ENCODE measurements at regions of chr2 and their contacts with region 1.

Region 1: GRCh38 chr2:217785544-217786045 is 217.2 kb downstream of the TNS1 start:
- DNase-seq: peak; percentile 64 to 97 (median 88)

Region 2: DNA sequence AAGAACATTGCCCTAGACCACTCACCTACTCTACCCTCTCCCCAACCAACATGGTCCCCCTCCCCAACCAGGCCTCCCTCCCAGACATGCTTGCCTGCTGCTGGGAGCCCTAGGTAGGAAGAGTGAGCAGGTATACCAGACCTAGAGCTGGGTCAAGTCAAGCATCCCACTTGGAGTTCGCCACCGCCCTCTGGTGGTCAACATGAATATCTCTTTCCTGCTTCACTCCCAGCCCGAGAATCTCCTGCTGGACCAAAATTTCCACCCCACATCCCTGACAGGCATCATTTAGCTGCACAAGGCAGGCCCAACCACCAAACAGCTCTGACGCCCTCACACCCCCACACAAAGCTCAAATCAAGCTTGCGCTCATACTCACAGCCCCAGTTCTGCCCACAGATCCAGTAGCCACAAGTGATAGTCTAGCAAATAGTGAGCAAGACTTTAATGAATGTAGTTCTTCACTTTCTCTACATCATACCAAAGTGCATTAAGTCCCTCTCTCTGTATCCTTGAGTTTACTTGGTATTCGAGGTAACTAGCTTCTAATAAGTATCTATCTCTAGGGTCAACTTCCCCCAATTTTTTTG is 101.2 kb after region 1 on chr2:
- intact Hi-C with region 1: loop called (anchors 1 kb)
- DNase-seq: peak; percentile 50 to 96 (median 83)

Region 3: DNA sequence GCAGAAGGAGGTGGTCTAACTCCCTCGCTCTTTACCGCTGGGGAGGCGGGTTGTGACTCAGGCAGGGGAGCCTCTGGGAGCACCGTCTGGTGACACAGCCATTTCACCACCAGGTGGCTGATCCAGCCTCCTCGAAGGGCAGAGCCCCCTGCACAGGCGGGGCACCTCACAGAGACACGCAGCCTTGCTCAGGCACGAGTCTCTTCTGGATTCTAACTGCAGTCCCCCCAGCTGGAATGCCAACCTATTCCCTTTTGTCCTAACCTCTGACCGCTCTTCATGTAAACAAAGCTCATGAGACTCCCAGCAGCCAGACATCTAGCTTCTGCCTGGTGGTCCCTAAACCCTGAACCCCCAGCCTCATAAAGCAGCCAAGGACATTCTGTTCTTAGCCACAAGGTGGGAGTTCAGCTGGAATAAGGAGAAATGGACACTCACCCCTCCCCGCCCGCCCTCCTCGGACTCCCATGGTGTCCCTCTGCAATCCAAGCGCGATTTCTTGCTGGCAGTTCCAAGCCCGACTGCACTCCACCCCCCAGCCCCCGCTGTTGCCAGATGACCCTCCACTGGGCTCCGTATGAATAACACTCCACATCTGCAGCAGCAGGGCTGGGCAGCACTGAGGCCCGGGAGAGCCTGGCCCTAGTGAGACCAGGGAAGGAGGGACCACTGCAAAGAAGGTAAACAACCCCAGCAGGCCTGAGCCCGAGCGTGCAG is 132.9 kb after region 1 on chr2:
- intact Hi-C with region 1: no loop called
- DNase-seq: peak in 2 of 10 donors; percentile 45 to 88

Region 4: DNA sequence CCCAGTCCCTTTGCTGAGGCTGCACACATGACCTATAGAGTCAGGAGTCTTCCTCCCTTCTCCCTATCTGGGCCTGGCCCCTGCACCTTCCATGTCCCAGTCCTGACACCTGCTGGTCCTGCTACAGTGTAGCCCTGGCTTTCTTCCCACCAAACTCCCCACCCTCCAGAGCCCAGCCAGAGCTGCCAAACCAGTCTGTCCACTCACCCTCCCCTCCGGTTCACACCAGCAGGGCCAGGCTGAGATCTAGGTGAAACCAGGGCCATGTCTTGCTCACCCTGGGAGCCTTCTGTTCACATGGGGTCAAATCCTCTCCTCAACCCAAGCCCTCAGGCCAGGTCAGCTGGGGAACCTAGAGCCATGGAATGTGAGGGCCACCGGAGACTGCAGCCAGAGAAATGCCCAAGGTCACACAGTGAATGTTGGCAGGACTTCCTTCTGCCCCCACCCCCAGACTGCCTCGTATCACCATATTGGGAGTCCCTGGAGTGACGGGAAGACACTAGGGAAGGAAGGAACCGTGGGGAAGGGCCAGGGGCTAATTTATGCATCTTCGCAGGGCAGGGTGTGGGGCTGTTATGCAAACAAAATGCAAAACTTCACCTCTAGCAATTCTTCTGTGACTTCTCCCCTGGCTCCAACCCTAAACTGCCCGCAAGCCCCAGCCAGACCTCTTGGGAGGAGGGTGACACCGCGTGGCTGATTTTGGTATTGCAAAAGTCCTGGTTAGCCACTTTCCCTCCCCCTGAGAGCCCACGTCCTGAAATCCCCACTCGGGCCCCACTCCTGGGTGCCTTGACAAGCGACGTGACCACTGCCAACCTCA is 202.6 kb after region 1 on chr2:
- intact Hi-C with region 1: loop called (anchors 1 kb)
- DNase-seq: peak; percentile 52 to 95 (median 85)

Region 5: GRCh38 chr2:218033590-218034496 is 248.2 kb after region 1 on chr2:
- intact Hi-C with region 1: loop called (anchors 1 kb)
- DNase-seq: peak in 2 of 10 donors; percentile 76 to 79

Region 6: DNA sequence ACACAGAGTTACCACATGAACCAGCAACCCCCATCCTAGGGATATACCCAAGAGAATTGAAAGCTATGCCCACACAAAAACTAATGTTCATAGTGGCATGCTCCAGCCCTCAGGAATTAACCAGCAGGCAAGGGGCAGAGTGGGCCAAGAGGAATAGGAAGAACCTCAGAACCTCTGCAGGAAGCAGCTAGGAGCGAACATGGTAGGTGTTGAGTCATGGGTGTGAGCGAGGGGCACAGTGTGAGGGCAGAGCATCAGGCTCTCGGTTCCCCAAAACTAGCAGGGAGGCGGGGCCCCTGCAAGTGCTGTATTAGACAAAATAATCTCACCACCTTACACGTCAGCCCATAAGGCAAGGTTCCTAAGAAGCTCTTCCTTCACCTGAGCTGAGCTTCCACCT is 277.9 kb after region 1 on chr2:
- intact Hi-C with region 1: loop called (anchors 1 kb)
- DNase-seq: no peak